ENCODE measurements at regions of chr2 and their contacts with region 1.

Region 1: GRCh38 chr2:134943540-134943939 is 24.9 kb downstream of the CCNT2 start:
- DNase-seq: peak; percentile 22
- H3K4me3 ChIP-seq: no peak overlapping the region
- H3K27ac ChIP-seq: peak overlapping the region; percentile 18
- H3K4me1 ChIP-seq: peaks cover 17% of the 10 kb centered on the region
- CTCF ChIP-seq: no peak

Region 2: DNA sequence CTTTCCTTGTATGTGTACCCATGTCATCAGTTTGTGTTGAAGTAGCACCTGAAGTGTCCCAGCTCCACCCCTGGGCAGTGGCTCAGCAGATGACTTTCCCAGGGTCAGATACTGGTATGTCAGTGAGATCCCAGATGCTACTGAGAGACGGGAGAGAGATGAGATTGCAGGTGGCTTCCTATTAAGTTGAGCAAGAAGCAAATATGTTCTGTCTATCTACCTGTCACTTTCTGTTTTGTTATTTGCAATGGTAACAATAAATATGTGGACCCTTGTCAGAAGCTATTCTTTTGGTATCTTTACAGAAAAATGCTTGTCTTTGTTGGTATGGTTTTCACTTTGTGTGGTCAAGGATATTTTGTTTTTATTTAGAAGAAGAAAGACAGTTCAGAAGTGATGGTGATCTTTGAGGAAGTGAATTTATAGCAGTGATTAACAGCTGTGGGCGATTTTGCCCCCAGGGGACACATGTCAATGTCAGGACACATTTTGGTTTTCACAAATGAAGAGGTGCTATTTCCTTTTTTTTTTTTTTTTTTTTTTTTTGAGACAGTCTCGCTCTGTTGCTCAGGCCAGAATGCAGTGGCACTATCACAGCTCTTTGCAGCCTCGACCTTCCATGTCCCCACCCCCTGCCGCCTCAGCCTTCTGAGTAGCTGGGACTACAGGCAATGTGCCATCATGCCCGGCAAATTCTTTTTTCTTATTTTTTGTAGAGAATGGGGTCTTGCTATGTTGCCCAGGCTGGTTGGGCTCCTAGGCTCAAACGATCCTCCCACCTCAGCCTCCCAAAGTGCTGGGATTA is 668.3 kb before region 1 on chr2:
- CTCF ChIA-PET with region 1: no interaction called
- POLR2A ChIA-PET with region 1: no interaction called
- intact Hi-C with region 1: no loop called
- DNase-seq: peak; percentile 96
- H3K4me3 ChIP-seq: peak overlapping the region; percentile 60
- H3K27ac ChIP-seq: peak overlapping the region; percentile 94
- H3K4me1 ChIP-seq: peaks cover 95% of the 10 kb centered on the region
- CTCF ChIP-seq: no peak

Region 3: DNA sequence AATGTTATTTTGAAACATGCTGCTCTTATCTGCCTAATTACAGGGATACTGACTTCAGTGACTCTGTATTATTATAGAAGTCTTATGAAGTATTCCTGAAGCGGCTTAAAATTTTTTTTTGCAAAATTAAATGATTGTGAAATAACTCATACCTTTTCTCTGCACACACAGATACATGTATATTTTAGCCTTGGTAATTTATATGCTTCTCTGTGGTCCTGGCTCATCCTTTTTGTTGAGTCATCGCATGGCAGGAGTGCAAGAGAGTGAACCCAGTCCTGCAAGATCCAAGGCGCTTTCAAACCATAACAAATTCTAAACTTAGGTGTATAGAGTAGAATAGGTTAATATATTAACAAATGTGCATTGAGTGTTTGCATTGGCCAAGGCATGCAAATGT is 16.3 kb before region 1 on chr2:
- CTCF ChIA-PET with region 1: no interaction called
- POLR2A ChIA-PET with region 1: interaction called, 4 read pairs
- intact Hi-C with region 1: loop called (anchors 1 kb)
- DNase-seq: no peak
- H3K4me3 ChIP-seq: no peak overlapping the region
- H3K27ac ChIP-seq: no peak overlapping the region
- H3K4me1 ChIP-seq: no peaks in the 10 kb centered on the region
- CTCF ChIP-seq: no peak

Region 4: GRCh38 chr2:134973241-134974138 is 29.9 kb after region 1 on chr2:
- CTCF ChIA-PET with region 1: no interaction called
- POLR2A ChIA-PET with region 1: no interaction called
- intact Hi-C with region 1: no loop called
- DNase-seq: no peak
- H3K4me3 ChIP-seq: no peak overlapping the region
- H3K27ac ChIP-seq: no peak overlapping the region
- H3K4me1 ChIP-seq: peaks cover 5% of the 10 kb centered on the region
- CTCF ChIP-seq: no peak

Region 5: DNA sequence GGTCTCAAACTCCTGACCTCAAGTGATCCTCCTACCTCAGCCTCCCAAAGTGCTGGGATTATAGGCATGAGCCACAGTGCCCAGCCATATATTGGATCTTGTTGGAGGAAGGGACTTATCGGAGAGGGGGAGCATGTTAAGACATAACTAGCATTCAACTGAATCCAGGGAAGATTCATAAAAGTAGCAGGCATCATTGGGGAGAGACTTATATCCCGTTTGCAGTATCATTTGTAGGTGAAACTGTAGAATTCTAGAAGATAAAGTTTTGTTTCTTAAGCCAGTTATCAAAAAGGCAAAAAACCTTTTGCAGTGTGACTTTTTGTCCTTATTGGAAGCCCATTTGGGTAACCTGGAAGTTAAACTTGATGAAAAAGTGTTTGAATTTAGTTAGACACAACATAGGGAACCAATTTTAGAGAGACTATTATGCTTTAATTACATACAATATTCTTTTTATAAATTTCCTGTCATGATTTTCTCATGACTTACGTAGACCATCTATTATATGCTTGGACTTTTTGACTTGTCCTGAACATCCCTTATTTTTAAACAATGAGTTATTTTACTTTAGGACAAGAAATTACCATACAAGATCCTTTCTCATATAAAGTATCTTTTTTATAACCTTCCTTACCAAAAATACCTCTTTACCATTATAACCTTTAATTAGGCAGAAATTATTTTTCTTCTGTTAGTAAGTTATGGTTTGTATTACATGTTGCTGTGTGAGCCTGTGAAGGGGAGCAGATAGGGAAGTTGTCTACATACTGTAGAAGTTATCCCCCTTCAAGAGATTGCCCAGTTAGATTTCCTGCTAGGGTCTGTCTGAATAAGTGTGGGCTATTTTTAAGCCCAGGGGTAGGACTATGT is 128.8 kb after region 1 on chr2:
- CTCF ChIA-PET with region 1: no interaction called
- POLR2A ChIA-PET with region 1: no interaction called
- intact Hi-C with region 1: no loop called
- DNase-seq: peak; percentile 65
- H3K4me3 ChIP-seq: no peak overlapping the region
- H3K27ac ChIP-seq: no peak overlapping the region
- H3K4me1 ChIP-seq: no peaks in the 10 kb centered on the region
- CTCF ChIP-seq: no peak

Measured in OCI-LY7 (cell line).